Heart right ventricle (tissue), 16 donors: ENCODE measurements at regions of chr2 and their contacts with region 1.

Region 1: GRCh38 chr2:158968396-158969161 is at the start of gene TANC1:
- DNase-seq: peak; percentile 95
- ATAC-seq: peak; percentile 92 to 97 (median 96)
- H3K4me3 ChIP-seq: peak within 1 kb of the TSS; percentile 62 to 97 (median 90)
- H3K27ac ChIP-seq: peak within 1 kb of the TSS; percentile 74 to 97 (median 92)
- H3K4me1 ChIP-seq: peaks cover 7 to 62% (median 44%) of the 10 kb centered on the region in 9 donors
- H3K27me3 ChIP-seq: peaks cover 0 to 44% (median 0%) of the 10 kb centered on the region in 7 donors
- CTCF ChIP-seq: no peak
- total RNA-seq, gene TANC1: 41.0 to 90.5 (median 74.2) TPM

Region 2: DNA sequence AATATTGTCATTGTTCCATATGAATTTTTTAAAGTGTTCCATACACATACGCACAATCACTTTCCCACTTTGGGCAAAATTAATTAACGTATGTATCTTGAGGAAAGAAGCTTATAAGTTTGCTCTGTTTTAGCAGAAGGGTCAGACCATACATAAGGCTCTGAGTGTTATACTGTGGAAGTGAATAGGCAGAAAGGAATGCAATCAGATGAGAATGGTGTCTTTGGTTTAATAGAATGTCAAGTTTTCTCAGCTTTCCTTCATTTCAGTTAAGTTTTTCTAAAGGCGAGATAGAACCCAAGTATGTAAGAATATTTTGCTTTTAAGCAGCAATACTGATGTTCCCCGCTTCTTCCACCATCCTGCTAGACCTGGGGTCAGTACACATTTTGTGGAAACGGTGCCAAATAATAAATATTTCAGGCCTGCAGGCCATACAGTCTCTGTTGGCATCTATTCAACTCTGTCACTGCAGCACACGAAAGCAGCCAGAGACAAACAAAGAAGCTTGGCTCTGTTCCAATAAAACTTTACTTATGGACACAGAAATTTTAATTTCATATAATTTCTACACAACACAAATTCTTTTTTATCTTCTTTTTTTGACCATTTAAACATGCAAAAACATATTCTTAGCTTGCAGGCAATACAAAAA is 766.3 kb before region 1 on chr2:
- intact Hi-C with region 1: no loop called
- DNase-seq: no peak
- ATAC-seq: no peak
- H3K4me3 ChIP-seq: no peak overlapping the region
- H3K27ac ChIP-seq: no peak overlapping the region
- H3K4me1 ChIP-seq: peaks cover 0 to 10% (median 0%) of the 10 kb centered on the region in 9 donors
- H3K27me3 ChIP-seq: no peaks in the 10 kb centered on the region
- CTCF ChIP-seq: no peak

Region 3: GRCh38 chr2:158903711-158904443 is 64.7 kb before region 1 on chr2:
- intact Hi-C with region 1: loop called in 6 of 10 experiments (anchors 5 to 10 kb)
- DNase-seq: no peak
- ATAC-seq: no peak
- H3K4me3 ChIP-seq: no peak overlapping the region
- H3K27ac ChIP-seq: no peak overlapping the region
- H3K4me1 ChIP-seq: peaks cover 0 to 6% (median 0%) of the 10 kb centered on the region in 9 donors
- H3K27me3 ChIP-seq: no peaks in the 10 kb centered on the region
- CTCF ChIP-seq: no peak

Region 4: DNA sequence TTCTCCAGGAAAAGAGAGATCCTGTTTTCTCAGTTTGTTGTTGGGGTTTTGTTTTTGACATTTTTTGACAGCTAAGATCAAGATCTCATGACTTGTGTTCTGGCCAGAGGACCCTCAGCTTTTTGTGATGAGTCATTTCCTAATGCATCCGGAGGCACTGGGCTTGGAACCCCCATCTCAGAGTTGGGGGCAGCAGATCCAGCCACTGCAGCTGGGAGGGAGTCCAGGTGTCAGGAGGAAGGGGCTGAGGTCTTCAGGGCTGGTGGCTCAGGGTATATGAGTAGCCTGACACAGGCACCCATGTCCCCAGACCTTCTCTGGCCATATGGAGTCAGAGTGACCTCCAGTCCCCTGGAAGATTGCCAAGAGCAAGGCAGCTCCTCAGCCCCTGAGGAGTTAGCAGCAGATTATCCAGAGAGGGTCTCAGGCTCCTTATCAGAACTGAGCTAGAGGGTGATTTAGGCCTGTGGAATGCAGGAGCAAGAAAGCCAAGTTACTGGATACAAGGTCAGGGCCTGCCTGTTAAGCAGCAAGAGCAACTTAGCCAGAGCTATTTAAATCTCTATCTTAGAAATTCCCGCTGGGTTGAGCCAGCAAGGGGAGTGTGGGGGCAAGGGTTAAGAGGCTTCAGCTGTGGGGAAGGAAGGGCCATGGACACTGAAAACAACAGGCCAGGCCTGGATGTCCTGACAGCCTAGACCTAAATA is 62.2 kb after region 1 on chr2:
- intact Hi-C with region 1: loop called in 4 of 10 experiments (anchors 5 to 10 kb)
- DNase-seq: peak; percentile 43 to 76
- ATAC-seq: peak; percentile 81 to 92 (median 88)
- H3K4me3 ChIP-seq: no peak overlapping the region
- H3K27ac ChIP-seq: peak overlapping the region; percentile 59 to 89 (median 82)
- H3K4me1 ChIP-seq: peaks cover 22 to 82% (median 63%) of the 10 kb centered on the region in 9 donors
- H3K27me3 ChIP-seq: no peaks in the 10 kb centered on the region
- CTCF ChIP-seq: no peak

Region 5: GRCh38 chr2:159035790-159036411 is 67.3 kb after region 1 on chr2:
- intact Hi-C with region 1: loop called in 4 of 10 experiments (anchors 5 to 10 kb)
- DNase-seq: no peak
- ATAC-seq: peak in 7 of 8 donors; percentile 53 to 74 (median 69)
- H3K4me3 ChIP-seq: no peak overlapping the region
- H3K27ac ChIP-seq: peak overlapping the region in 7 of 10 donors; percentile 6 to 50 (median 38)
- H3K4me1 ChIP-seq: peaks cover 17 to 62% (median 45%) of the 10 kb centered on the region in 9 donors
- H3K27me3 ChIP-seq: no peaks in the 10 kb centered on the region
- CTCF ChIP-seq: peak in 7 of 9 donors; percentile 15 to 53 (median 43)

Region 6: DNA sequence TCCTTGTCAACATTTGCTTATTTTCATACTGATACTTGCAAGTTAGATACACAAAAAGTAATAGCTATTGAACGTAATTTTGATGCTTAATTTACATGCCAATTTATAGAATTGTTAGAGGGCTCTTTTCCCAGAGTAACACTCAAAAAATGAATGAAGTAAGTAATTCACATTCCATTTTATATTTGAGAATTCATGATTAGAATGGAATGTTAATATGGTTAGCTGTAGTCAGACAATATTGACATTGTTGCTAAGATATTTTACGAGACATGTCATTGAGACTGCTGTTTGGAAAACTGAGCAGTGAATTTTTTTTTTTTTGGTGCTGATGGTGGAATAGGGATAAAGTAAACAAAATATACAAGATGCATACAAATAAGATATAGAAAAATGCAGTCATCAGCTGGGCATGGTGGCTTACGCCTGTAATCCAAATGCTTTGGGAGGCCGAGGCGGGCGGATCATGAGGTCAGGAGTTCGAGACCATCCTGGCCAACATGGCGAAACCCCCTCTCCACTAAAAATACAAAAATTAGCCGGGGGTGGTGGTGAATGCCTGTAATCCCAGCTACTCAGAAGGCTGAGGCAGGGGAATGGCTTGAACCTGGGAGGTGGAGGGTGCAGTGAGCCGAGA is 115.1 kb after region 1 on chr2:
- intact Hi-C with region 1: loop called in 1 of 10 experiments (anchors 10 kb)
- DNase-seq: no peak
- ATAC-seq: peak in 6 of 8 donors; percentile 27 to 67 (median 49)
- H3K4me3 ChIP-seq: no peak overlapping the region
- H3K27ac ChIP-seq: peak overlapping the region; percentile 7 to 89 (median 72)
- H3K4me1 ChIP-seq: peaks cover 19 to 85% (median 71%) of the 10 kb centered on the region in 9 donors
- H3K27me3 ChIP-seq: no peaks in the 10 kb centered on the region
- CTCF ChIP-seq: no peak

Region 7: GRCh38 chr2:159111346-159111924 is 142.9 kb after region 1 on chr2:
- intact Hi-C with region 1: loop called in 6 of 10 experiments (anchors 5 to 10 kb)
- DNase-seq: peak in 1 of 2 donors; percentile 64
- ATAC-seq: peak; percentile 36 to 88 (median 78)
- H3K4me3 ChIP-seq: no peak overlapping the region
- H3K27ac ChIP-seq: peak overlapping the region in 6 of 10 donors; percentile 31 to 68 (median 59)
- H3K4me1 ChIP-seq: peaks cover 0 to 81% (median 35%) of the 10 kb centered on the region in 9 donors
- H3K27me3 ChIP-seq: no peaks in the 10 kb centered on the region
- CTCF ChIP-seq: peak in 1 of 9 donors; percentile 3

Region 8: GRCh38 chr2:159118115-159118858 is 149.7 kb after region 1 on chr2:
- intact Hi-C with region 1: loop called (anchors 2 to 10 kb)
- DNase-seq: peak; percentile 82 to 92
- ATAC-seq: peak; percentile 79 to 96 (median 88)
- H3K4me3 ChIP-seq: no peak overlapping the region
- H3K27ac ChIP-seq: peak overlapping the region in 8 of 10 donors; percentile 7 to 81 (median 75)
- H3K4me1 ChIP-seq: peaks cover 4 to 64% (median 25%) of the 10 kb centered on the region in 9 donors
- H3K27me3 ChIP-seq: no peaks in the 10 kb centered on the region
- CTCF ChIP-seq: peak; percentile 89 to 95 (median 94)

Region 9: DNA sequence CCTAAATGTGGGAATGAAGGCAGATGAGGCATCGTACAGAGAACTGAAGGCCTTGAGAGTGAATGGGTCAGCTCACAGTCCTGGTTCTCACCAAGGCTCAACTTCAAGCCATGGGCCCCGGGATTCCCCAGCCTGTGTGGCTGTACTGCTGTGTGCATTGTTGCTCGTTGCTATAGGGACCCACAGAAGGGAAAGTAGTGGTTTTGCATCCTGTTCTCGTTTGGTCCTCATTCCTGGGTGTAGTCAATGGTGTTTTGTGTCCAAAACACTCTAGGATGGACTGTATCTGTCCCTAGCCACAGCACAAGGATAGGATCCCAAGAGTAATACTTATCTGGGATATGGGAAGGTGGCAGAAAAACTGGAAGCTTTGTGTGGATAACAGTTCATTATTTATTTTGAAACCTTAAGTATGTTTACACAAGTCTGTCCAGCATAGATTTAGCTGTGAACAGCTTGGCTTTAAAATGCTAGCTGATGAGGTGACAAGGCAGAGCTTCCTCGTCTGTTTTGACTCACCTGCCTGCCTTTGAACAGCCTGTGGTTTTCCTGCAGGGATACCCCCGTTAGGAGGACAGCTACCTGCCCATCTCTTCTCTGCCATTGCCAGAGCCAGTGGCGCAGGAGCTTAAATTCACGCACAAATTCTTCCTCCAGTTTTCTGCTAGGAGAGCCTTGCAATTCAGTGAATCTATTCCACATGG is 232.9 kb after region 1 on chr2:
- intact Hi-C with region 1: no loop called
- DNase-seq: no peak
- ATAC-seq: no peak
- H3K4me3 ChIP-seq: no peak overlapping the region
- H3K27ac ChIP-seq: peak overlapping the region in 8 of 10 donors; percentile 29 to 75 (median 56)
- H3K4me1 ChIP-seq: peaks cover 0 to 65% (median 47%) of the 10 kb centered on the region in 9 donors
- H3K27me3 ChIP-seq: no peaks in the 10 kb centered on the region
- CTCF ChIP-seq: no peak